Activated CD4-positive, alpha-beta T cell treated with anti-CD3 and anti-CD28 coated beads for 36 hours (primary cell): ENCODE measurements at regions of chr20 and their contacts with region 1.

Region 1: DNA sequence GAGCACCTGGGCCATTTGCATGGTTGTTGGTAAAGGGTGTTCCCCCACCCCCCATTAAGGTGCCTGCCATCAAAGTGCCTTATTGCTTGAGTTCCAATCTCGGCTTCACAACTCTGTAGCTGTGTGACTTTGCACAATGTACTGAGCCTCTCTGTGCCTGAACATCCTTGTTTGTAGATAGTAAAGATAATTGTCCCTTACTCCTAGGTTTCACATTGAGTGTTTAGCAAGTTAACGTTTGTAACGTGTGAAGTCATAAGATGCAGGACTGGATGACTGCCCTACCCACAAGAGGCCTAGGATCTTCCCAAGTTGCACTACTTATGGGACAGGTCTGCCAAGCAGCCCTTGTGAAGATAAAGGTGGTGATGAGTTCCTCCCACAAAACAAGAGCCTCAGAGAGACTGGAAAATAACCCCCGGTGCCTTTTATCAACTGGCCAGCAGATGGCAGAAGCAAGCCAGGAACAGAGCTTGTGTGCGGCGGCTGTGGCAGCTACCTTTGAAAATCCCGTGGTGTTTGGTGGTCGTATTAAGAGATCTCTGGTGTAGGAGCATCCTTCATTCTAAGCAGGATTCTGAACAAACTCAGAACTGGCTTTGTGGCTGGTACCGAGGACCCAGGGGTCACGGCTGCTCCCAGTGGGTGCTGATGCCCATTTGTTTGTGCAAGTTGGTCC is 99.0 kb downstream of the CDH26 start:
- DNase-seq: peak; percentile 82
- ATAC-seq: peak; percentile 75
- H3K4me3 Mint-ChIP-seq: peak overlapping the region; percentile 71
- H3K27ac Mint-ChIP-seq: peak overlapping the region; percentile 91
- H3K4me1 Mint-ChIP-seq: peaks cover 44% of the 10 kb centered on the region
- H3K27me3 Mint-ChIP-seq: no peaks in the 10 kb centered on the region

Region 2: GRCh38 chr20:59948828-59949720 is 108.2 kb before region 1 on chr20:
- CTCF ChIA-PET with region 1: interaction called, 16 read pairs
- POLR2A ChIA-PET with region 1: no interaction called
- intact Hi-C with region 1: loop called (anchors 2 kb)
- DNase-seq: peak; percentile 39
- ATAC-seq: peak; percentile 74
- H3K4me3 Mint-ChIP-seq: peak overlapping the region; percentile 13
- H3K27ac Mint-ChIP-seq: peak overlapping the region; percentile 93
- H3K4me1 Mint-ChIP-seq: peaks cover 27% of the 10 kb centered on the region
- H3K27me3 Mint-ChIP-seq: no peaks in the 10 kb centered on the region

Region 3: DNA sequence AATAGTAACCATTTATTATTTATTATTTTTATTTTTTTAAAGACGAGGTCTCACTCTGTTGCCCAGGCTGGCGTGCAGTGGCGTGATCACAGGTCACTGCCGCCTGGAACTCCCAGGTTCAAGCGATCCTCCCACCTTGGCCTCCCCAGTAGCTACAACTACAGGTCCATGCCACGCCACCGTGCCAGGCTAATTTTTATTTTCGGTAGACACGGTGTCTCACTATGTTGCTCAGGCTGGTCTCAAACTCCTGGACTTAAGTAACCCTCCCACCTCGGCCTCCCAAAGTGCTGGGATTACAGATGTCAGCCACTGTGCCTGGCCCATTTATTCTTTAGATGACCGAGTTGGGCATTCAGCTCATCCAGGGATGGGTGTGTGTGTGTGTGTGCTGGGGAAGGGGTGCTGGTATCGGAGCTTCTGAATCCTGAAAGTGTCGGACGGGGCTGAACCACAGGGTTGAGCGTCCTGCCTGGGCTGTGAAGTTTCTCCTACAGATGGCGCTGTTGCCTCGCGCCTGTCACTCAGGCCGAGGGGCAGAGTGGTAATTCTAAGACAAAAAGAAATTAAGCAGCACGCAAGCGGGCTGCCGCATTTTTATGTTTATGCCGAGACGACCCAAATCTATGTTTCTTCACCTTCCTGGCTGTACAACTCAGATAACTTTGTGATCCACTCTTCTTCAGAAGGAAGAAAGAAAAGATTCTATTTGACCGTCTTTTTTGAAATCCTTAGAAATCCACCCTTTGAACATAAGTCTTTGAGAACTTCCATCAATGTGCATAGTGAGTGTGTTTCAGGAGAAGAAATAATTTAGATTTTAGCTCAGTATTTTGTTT is 153.7 kb after region 1 on chr20:
- CTCF ChIA-PET with region 1: interaction called, 6 read pairs
- POLR2A ChIA-PET with region 1: no interaction called
- intact Hi-C with region 1: loop called in 1 of 2 experiments (anchors 1 kb)
- DNase-seq: peak; percentile 83
- ATAC-seq: peak; percentile 77
- H3K4me3 Mint-ChIP-seq: no peak overlapping the region
- H3K27ac Mint-ChIP-seq: no peak overlapping the region
- H3K4me1 Mint-ChIP-seq: peaks cover 4% of the 10 kb centered on the region
- H3K27me3 Mint-ChIP-seq: no peaks in the 10 kb centered on the region

Region 4: GRCh38 chr20:61120595-61121515 is 1063.6 kb after region 1 on chr20:
- CTCF ChIA-PET with region 1: no interaction called
- POLR2A ChIA-PET with region 1: no interaction called
- intact Hi-C with region 1: loop called in 1 of 2 experiments (anchors 2 kb)
- DNase-seq: peak; percentile 68
- ATAC-seq: peak; percentile 95
- H3K4me3 Mint-ChIP-seq: no peak overlapping the region
- H3K27ac Mint-ChIP-seq: no peak overlapping the region
- H3K4me1 Mint-ChIP-seq: peaks cover 5% of the 10 kb centered on the region
- H3K27me3 Mint-ChIP-seq: peaks cover 3% of the 10 kb centered on the region

Region 5: DNA sequence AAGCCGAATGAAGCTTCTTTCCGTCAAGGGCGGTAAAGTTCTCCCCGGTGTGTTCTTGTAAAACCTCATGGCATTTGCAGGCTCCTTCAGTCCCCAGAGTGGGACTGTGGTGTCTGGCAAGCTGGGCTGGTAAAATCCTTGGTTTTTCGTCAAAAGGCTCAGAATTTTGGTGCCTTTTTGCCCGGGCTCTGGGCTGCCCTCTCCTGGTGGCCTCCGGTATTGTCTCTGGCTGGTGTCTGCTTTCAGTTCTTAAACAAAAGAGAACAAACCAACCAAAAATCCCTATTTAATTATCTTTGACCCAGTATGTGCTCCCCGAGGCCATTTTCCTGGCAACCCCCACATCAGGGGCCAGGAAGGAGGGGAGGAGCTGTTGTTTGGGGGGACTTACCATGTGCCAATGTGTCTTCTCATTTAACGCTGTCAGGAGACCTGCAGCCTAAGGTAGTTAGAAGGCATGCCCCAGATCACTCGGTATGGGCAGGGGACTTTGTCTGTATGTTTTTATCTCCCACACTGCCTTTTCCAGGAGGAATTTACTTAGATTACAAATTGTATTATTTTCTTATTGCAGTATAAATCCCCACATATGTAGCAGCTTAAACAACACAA is 1205.9 kb after region 1 on chr20:
- CTCF ChIA-PET with region 1: no interaction called
- POLR2A ChIA-PET with region 1: no interaction called
- intact Hi-C with region 1: loop called in 1 of 2 experiments (anchors 10 kb)
- DNase-seq: peak; percentile 65
- ATAC-seq: no peak
- H3K4me3 Mint-ChIP-seq: no peak overlapping the region
- H3K27ac Mint-ChIP-seq: no peak overlapping the region
- H3K4me1 Mint-ChIP-seq: no peaks in the 10 kb centered on the region
- H3K27me3 Mint-ChIP-seq: peaks cover 12% of the 10 kb centered on the region